Posterior cingulate gyrus (tissue), 11 donors: ENCODE measurements at regions of chr6 and their contacts with region 1.

Region 1: DNA sequence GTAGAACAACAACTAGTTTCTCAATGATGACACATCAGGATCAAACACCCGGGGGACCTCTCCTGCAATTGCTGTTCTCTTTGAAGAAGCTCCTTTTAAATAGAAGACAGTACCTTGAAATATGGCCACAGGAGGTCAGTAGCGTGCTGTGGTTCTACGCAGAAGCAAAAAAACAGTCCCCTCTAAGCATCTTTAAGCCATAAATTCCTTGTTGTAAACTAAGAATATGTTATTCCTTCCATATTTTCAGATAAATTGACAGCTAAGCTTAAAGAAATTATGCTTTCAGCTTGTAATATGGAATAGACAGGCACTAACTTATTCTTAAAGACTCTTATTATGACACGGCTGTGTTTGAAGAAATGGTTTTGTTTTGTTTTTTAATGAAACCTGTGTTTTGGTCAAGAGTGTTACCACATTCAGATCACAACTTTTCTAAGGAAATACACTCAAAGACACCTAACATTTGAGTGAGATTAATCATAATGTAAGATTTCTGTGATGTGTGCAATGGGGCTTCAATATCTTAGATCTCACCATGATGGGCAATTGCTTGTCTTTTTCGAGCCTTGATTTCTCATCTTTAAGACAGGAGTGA is 49.7 kb upstream of the IL20RA start:
- DNase-seq: peak in 5 of 10 donors; percentile 21 to 59 (median 51)

Region 2: DNA sequence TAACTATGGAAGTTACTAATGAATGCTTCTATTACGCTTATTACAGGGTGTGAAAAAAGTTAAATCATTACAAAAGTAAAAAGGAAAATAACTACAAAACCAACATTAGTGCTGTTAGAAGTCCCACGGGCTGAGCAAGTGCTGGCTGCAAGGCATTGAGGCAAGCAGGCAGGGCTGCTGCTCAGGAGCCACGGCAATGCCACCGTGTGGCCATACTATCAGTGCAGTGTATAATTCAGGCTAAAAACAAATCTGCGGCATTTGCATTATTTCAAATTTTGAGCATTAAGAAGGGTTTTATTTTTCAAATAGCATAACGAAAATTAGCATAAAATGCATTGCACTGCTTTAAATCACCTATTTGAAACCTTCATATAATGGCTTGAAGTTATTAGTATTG is 107.6 kb after region 1 on chr6:
- intact Hi-C with region 1: loop called (anchors 2 kb)
- DNase-seq: peak; percentile 44 to 95 (median 68)

Region 3: GRCh38 chr6:137313928-137314855 is 219.7 kb after region 1 on chr6:
- intact Hi-C with region 1: loop called (anchors 2 kb)
- DNase-seq: peak; percentile 35 to 89 (median 68)

Region 4: DNA sequence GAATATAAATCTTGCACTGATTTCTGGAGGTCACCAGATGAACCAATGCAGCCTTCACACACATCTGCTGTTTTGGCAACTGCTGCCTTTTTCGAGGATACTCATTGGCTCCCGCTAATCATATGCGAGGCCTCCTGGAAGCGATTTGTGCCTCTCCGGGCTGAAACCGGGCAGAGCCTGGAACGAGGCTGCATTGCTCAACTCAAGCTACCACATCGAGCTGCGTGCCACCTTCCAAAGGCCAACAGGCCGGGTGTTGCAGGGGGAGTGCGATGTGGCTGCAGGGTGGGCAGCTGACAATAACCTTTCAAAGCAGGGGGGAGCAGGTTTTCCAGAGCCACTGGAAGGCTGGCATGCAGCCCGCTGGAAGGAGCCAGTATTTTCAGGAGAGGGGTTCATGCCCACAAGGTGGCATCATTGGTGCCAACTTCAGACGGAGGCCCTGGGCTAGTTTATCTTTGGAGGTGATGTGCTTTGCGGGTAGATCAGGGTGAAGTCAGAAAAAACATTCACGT is 247.2 kb after region 1 on chr6:
- intact Hi-C with region 1: no loop called
- DNase-seq: peak; percentile 36 to 94 (median 66)